ENCODE measurements at regions of chr3 and their contacts with region 1.

Region 1: GRCh38 chr3:45092132-45093031 is 53.8 kb downstream of the CDCP1 start:
- DNase-seq: peak; percentile 98
- ATAC-seq: peak; percentile 91
- H3K4me3 ChIP-seq: no peak overlapping the region
- H3K27ac ChIP-seq: peak overlapping the region; percentile 94
- H3K4me1 ChIP-seq: peaks cover 54% of the 10 kb centered on the region
- H3K27me3 ChIP-seq: no peaks in the 10 kb centered on the region
- CTCF ChIP-seq: peak; percentile 47; the same call in 1 of the 2 replicates

Region 2: DNA sequence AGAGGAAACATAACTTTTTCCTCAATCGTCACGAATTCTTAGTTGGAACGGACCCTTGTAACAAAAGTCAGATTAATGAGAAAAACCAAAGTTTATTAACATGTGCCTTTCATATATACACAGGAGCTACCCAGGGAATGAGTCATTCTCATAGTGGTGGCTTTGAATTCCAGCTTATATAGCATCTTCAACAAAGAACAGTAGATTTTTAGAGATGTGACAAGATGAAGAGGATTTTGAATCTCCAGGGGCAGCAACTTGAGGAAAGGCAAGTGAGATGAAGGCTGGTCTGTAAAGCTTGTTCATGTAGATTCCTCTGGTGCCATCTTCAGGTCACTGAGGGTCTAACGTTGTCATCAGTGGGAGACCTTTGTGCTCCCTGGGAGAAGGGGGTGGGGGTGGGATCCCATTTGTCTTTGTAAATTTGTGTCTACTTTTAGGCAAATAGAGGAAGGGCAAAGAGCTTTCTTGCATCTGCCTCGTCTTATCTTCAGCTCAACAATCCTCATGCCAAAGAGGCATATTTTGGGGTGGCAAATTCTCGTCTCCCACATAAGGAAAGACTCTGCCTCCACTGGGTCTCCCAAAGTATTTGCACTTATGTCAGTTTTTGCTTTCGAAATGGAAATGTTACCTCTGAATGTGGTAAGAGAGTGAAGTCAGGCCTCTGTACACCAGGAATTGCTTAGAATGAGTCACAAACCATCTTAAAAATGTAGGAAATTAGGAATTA is 36.8 kb before region 1 on chr3:
- CTCF ChIA-PET with region 1: interaction called, 7 read pairs
- POLR2A ChIA-PET with region 1: no interaction called
- intact Hi-C with region 1: loop called (anchors 1 kb)
- DNase-seq: peak; percentile 51
- ATAC-seq: peak; percentile 47
- H3K4me3 ChIP-seq: no peak overlapping the region
- H3K27ac ChIP-seq: peak overlapping the region; percentile 78
- H3K4me1 ChIP-seq: peaks cover 50% of the 10 kb centered on the region
- H3K27me3 ChIP-seq: no peaks in the 10 kb centered on the region
- CTCF ChIP-seq: peak; percentile 49

Region 3: DNA sequence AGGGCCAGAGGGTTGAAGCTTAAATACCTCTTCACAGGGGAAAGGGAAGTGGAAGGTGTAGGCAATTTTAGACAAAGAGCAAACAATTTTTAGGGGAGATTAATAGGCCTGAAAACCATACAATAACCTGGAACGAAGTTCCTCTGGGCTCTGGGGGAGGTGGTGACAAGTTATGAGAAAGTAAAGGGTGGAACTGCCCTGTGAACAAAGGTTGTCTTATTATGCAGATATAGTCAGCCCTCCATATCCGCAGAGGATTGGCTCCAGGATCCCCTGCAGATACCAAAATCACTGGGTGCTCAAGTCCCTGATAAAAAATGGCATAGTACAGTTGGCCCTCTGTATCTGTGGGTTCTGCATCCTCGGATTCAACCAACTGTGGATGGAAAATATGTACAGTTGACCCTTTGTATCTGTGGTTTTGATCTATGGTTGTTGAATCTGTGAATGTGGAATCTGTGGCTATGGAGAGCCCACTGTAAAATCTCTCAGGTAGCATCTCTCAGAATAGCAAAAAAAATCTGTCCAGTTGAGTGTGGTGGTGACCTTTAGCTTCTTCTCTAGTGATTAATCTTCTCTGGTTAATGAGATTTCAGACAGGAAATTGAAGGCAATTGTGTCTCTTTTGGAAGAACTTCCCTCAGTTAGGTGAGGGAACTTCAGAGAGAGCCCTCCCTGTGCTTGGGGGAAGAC is 26.1 kb before region 1 on chr3:
- CTCF ChIA-PET with region 1: no interaction called
- POLR2A ChIA-PET with region 1: no interaction called
- intact Hi-C with region 1: no loop called
- DNase-seq: no peak
- ATAC-seq: no peak
- H3K4me3 ChIP-seq: no peak overlapping the region
- H3K27ac ChIP-seq: peak overlapping the region; percentile 90
- H3K4me1 ChIP-seq: peaks cover 36% of the 10 kb centered on the region
- H3K27me3 ChIP-seq: no peaks in the 10 kb centered on the region
- CTCF ChIP-seq: no peak

Region 4: GRCh38 chr3:45145681-45146614 is 53.6 kb after region 1 on chr3 and contains the start of gene CDCP1:
- CTCF ChIA-PET with region 1: interaction called, 3 read pairs
- POLR2A ChIA-PET with region 1: interaction called, 5 read pairs
- intact Hi-C with region 1: loop called (anchors 2 kb)
- DNase-seq: peak; percentile 81
- ATAC-seq: peak; percentile 93
- H3K4me3 ChIP-seq: peak within 1 kb of the TSS; percentile 98
- H3K27ac ChIP-seq: peak within 1 kb of the TSS; percentile 84
- H3K4me1 ChIP-seq: peaks cover 43% of the 10 kb centered on the region
- H3K27me3 ChIP-seq: no peaks in the 10 kb centered on the region
- CTCF ChIP-seq: no peak
- total RNA-seq, gene CDCP1: 120 and 124 TPM in 2 replicates

Region 5: DNA sequence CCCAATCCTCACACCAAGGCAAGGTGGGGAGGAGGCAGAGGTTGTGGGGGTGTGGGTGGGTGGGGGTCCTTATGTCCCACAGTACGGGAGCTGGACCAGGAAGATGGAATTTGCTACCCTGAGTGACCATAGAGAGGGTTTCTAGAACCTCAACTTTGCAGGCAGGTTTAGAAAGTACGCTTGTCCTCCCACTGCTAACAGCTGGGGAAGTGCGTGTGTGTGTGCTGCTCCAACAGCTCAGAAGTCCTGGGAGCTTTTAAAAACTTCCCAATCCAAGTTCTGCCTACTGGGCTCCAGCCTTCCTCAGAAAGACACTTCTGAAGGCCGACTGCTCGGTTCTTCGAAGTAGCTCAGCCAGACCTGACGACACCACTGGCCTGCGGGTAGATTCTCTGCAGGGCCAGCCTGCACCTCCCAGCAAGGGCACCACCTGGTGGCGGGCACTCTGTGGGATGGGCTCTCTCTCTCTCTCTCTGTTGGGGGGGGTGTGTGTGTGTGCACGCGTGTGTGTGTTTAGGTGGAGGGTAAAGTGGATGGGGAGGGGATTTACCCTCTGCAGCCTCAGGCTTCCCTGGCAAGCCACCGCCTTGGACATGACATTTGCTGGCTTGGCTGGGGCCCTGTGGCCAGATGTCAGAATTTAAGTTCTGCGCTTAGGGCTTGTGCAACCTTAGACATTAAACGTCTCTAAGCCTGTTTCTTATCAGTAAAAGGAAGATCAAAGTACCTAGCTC is 118.1 kb after region 1 on chr3:
- CTCF ChIA-PET with region 1: interaction called, 6 read pairs
- POLR2A ChIA-PET with region 1: interaction called, 6 read pairs
- intact Hi-C with region 1: loop called (anchors 1 kb)
- DNase-seq: peak; percentile 92
- ATAC-seq: peak; percentile 98
- H3K4me3 ChIP-seq: no peak overlapping the region
- H3K27ac ChIP-seq: no peak overlapping the region
- H3K4me1 ChIP-seq: peaks cover 13% of the 10 kb centered on the region
- H3K27me3 ChIP-seq: no peaks in the 10 kb centered on the region
- CTCF ChIP-seq: peak; percentile 92

Region 6: DNA sequence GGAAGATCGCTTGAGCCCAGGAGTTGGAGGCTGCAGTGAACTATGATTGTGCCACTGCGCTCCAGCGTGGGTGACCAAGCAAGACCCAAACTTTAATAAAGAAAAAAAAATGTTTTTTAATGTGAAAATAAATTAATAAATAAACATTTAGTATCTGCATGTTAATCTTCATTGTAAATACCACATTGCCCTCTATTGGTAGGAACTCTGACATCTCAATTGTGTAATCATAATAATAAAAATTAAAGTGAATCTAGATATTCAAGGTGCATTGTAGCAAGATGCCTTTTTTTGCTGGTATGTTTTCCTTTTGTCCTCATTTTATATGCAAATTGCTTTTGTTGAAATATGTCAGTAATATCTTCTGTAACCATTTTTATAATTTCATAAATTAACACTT is 407.1 kb after region 1 on chr3:
- CTCF ChIA-PET with region 1: interaction called, 5 read pairs
- POLR2A ChIA-PET with region 1: no interaction called
- intact Hi-C with region 1: loop called (anchors 2 kb)
- DNase-seq: peak; percentile 72
- ATAC-seq: peak; percentile 66; the same call in 1 of the 2 replicates
- H3K4me3 ChIP-seq: no peak overlapping the region
- H3K27ac ChIP-seq: no peak overlapping the region
- H3K4me1 ChIP-seq: no peaks in the 10 kb centered on the region
- H3K27me3 ChIP-seq: no peaks in the 10 kb centered on the region
- CTCF ChIP-seq: peak; percentile 66